Astrocyte of the cerebellum (primary cell): ENCODE measurements at regions of chr11 and their contacts with region 1.

Region 1: DNA sequence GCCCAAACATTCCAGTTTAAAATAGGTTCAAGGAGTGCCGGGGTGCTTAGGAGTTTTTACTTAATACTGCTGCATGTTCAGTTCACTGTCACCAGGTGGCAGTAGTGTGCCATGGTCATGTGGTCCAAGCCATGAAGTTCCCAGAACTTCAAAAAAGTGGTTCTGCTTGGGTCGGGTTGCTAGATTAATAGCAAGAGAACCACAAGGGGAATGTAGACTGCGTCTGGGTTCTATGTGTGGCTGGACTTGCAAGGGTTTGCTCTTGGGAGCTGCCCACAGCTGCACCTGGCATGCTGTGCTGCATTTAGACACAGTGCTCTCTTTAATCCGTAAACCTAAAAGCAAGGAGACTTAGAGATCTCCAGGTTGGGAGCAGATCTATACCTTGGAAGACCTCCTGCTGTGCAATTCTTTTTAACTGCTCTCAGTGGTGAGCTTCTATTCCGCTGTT is 6.5 kb upstream of the SPON1 start:
- DNase-seq: peak; percentile 63
- H3K4me3 ChIP-seq: no peak overlapping the region
- CTCF ChIP-seq: peak; percentile 88

Region 2: GRCh38 chr11:14223636-14224288 is 267.8 kb after region 1 on chr11:
- in situ Hi-C with region 1: loop called (anchors 10 kb)
- DNase-seq: no peak
- H3K4me3 ChIP-seq: no peak overlapping the region
- CTCF ChIP-seq: no peak